ENCODE measurements at regions of chrX and their contacts with region 1.

Region 1: GRCh38 chrX:118872102-118872566 is 48.5 kb downstream of the ZCCHC12 start:
- DNase-seq: no peak

Region 2: DNA sequence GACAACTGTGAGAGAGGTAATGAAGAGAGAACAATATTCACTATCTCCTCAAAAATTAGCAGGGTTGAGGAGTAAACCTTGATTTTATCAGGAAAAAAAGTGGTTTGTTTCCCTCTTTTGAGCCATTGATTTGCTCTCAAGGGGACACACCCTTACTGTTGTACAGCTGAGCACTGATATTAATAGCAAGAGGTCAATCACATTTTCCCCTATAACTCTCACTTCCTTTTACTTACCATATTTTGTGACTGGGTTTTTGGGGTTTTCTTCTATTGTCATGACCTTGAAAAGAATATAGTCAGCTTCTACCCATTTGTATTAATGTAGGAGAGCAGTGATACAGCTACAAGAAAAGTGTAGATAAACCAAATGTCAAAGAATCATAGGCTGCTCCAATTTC is 32.1 kb after region 1 on chrX:
- intact Hi-C with region 1: loop called in 1 of 2 experiments (anchors 2 kb)
- DNase-seq: no peak